ENCODE measurements at regions of chr11 and their contacts with region 1.

Region 1: GRCh38 chr11:29432719-29433325 is 584.0 kb downstream of the KCNA4 start:
- DNase-seq: peak; percentile 36
- H3K4me3 ChIP-seq: no peak overlapping the region
- H3K27ac ChIP-seq: no peak overlapping the region
- H3K4me1 ChIP-seq: no peaks in the 10 kb centered on the region
- H3K27me3 ChIP-seq: no peaks in the 10 kb centered on the region
- CTCF ChIP-seq: peak; percentile 14 to 34
- POLR2A ChIP-seq: no peak

Region 2: GRCh38 chr11:29634248-29634647 is 201.4 kb after region 1 on chr11:
- CTCF ChIA-PET with region 1: interaction called, 10 read pairs
- POLR2A ChIA-PET with region 1: no interaction called
- dilution Hi-C with region 1: no loop called
- intact Hi-C with region 1: loop called (anchors 1 kb)
- DNase-seq: peak; percentile 29
- H3K4me3 ChIP-seq: no peak overlapping the region
- H3K27ac ChIP-seq: no peak overlapping the region
- H3K4me1 ChIP-seq: no peaks in the 10 kb centered on the region
- H3K27me3 ChIP-seq: no peaks in the 10 kb centered on the region
- CTCF ChIP-seq: no peak
- POLR2A ChIP-seq: no peak

Region 3: GRCh38 chr11:30196400-30197206 is 763.8 kb after region 1 on chr11:
- CTCF ChIA-PET with region 1: interaction called, 28 read pairs
- POLR2A ChIA-PET with region 1: no interaction called
- dilution Hi-C with region 1: no loop called
- intact Hi-C with region 1: loop called (anchors 1 kb)
- DNase-seq: peak; percentile 54
- H3K4me3 ChIP-seq: no peak overlapping the region
- H3K27ac ChIP-seq: no peak overlapping the region
- H3K4me1 ChIP-seq: no peaks in the 10 kb centered on the region
- H3K27me3 ChIP-seq: no peaks in the 10 kb centered on the region
- CTCF ChIP-seq: peak; percentile 71 to 82
- POLR2A ChIP-seq: no peak

Region 4: GRCh38 chr11:30314625-30315024 is 881.8 kb after region 1 on chr11:
- CTCF ChIA-PET with region 1: interaction called, 4 read pairs
- POLR2A ChIA-PET with region 1: no interaction called
- dilution Hi-C with region 1: no loop called
- intact Hi-C with region 1: loop called (anchors 1 kb)
- DNase-seq: no peak
- H3K4me3 ChIP-seq: no peak overlapping the region
- H3K27ac ChIP-seq: no peak overlapping the region
- H3K4me1 ChIP-seq: no peaks in the 10 kb centered on the region
- H3K27me3 ChIP-seq: peaks cover 8 to 28% of the 10 kb centered on the region in 2 experiments
- CTCF ChIP-seq: peak; percentile 9 to 37
- POLR2A ChIP-seq: no peak

Region 5: GRCh38 chr11:30333405-30333804 is 900.6 kb after region 1 on chr11:
- CTCF ChIA-PET with region 1: interaction called, 4 read pairs
- POLR2A ChIA-PET with region 1: no interaction called
- dilution Hi-C with region 1: no loop called
- intact Hi-C with region 1: loop called (anchors 1 kb)
- DNase-seq: no peak
- H3K4me3 ChIP-seq: no peak overlapping the region
- H3K27ac ChIP-seq: no peak overlapping the region
- H3K4me1 ChIP-seq: no peaks in the 10 kb centered on the region
- H3K27me3 ChIP-seq: no peaks in the 10 kb centered on the region
- CTCF ChIP-seq: peak in 1 of 2 donors; percentile 37
- POLR2A ChIP-seq: no peak

Region 6: GRCh38 chr11:30917859-30918478 is 1485.1 kb after region 1 on chr11:
- CTCF ChIA-PET with region 1: no interaction called
- POLR2A ChIA-PET with region 1: no interaction called
- dilution Hi-C with region 1: no loop called
- intact Hi-C with region 1: loop called (anchors 10 kb)
- DNase-seq: peak; percentile 60
- H3K4me3 ChIP-seq: no peak overlapping the region
- H3K27ac ChIP-seq: no peak overlapping the region
- H3K4me1 ChIP-seq: no peaks in the 10 kb centered on the region
- H3K27me3 ChIP-seq: peaks cover 0 to 6% of the 10 kb centered on the region in 2 experiments
- CTCF ChIP-seq: peak; percentile 37 to 40
- POLR2A ChIP-seq: no peak